Activated CD4-positive, alpha-beta memory T cell treated with anti-CD3 and anti-CD28 coated beads, Interleukin-2, amount 10 ng/mL, durations not matched to agents 7 days and 5 days (primary cell): ENCODE measurements at regions of chr11 and their contacts with region 1.

Region 1: DNA sequence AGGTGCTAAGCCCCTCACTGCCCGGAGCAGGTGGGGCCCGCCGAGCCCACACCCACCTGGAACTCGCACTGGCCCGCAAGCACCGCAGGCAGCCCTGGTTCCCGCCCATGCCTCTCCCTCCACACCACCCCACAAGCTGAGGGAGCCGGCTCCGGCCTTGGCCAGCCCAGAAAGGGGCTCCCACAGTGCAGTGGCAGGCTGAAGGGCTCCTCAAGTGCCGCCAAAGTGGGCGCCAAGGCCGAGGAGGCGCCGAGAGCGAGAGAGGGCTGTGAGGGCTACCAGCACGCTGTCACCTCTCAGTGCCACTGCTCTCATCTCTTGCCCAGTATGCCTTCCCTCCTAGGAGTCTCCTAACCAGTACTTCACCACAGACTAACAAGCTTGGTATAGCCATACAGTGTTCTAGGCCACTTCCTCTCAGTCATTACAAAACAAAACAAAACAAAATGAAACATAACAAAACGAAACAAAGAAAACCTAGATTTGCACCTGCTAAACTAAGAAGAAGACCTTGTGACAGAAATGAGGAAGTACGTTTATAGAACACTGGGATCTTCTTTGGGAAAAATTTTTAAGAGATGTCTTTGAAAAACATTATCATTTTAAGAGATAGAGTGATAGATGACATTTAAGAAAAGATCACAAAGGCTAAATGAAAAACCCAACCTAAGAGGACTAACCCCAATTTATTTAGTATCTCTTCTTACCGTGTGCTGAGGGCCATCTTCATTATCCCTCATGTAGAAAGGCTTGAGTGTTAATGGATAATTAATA is 47.7 kb upstream of the GAB2 start:
- DNase-seq: peak; percentile 65
- H3K4me3 Mint-ChIP-seq: peak overlapping the region; percentile 72
- H3K27ac Mint-ChIP-seq: peak overlapping the region; percentile 97
- H3K4me1 Mint-ChIP-seq: peaks cover 45% of the 10 kb centered on the region
- H3K27me3 Mint-ChIP-seq: no peaks in the 10 kb centered on the region

Region 2: GRCh38 chr11:78325274-78325781 is 140.0 kb before region 1 on chr11:
- CTCF ChIA-PET with region 1: no interaction called
- POLR2A ChIA-PET with region 1: no interaction called
- DNase-seq: peak; percentile 44
- H3K4me3 Mint-ChIP-seq: no peak overlapping the region
- H3K27ac Mint-ChIP-seq: peak overlapping the region; percentile 93
- H3K4me1 Mint-ChIP-seq: peaks cover 87% of the 10 kb centered on the region
- H3K27me3 Mint-ChIP-seq: no peaks in the 10 kb centered on the region

Region 3: DNA sequence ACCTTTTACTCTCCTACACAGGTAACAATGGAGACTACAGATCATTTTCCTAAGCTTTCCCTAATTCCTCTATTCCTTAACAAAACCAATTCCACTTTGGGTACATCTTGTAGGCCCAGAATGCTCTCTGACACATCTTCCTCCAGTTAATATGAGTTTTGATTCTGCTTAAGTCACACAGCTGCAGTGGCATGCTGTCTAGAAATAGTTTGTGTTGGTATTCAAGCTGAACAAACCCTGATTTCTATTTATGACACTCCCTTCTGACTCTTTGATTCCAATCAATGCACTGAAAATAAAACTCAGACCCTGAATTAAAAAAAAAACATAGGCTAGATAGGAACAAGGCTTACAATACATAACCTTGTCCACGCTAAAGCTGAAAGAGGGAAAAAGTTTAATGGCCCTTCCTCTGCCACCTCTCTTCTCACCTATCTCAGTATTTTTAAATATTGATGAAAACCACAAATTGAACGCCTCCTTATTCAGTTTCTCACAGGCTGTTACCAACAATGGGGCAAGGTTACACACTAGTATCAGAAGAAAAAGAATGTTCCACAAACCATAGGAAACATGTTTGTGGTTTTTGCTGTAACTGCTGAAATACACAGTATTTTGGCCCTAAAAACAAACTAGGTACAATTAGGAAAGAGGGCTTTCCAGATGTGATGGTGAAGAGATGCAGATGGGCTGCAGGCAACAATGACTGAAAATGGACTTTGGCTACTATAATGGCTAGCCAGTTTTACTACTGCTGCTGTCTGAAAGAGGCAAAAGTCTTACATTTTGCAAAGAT is 12.0 kb before region 1 on chr11:
- CTCF ChIA-PET with region 1: interaction called, 3 read pairs
- POLR2A ChIA-PET with region 1: interaction called, 10 read pairs
- DNase-seq: no peak
- H3K4me3 Mint-ChIP-seq: no peak overlapping the region
- H3K27ac Mint-ChIP-seq: peak overlapping the region; percentile 41
- H3K4me1 Mint-ChIP-seq: peaks cover 25% of the 10 kb centered on the region
- H3K27me3 Mint-ChIP-seq: no peaks in the 10 kb centered on the region

Region 4: DNA sequence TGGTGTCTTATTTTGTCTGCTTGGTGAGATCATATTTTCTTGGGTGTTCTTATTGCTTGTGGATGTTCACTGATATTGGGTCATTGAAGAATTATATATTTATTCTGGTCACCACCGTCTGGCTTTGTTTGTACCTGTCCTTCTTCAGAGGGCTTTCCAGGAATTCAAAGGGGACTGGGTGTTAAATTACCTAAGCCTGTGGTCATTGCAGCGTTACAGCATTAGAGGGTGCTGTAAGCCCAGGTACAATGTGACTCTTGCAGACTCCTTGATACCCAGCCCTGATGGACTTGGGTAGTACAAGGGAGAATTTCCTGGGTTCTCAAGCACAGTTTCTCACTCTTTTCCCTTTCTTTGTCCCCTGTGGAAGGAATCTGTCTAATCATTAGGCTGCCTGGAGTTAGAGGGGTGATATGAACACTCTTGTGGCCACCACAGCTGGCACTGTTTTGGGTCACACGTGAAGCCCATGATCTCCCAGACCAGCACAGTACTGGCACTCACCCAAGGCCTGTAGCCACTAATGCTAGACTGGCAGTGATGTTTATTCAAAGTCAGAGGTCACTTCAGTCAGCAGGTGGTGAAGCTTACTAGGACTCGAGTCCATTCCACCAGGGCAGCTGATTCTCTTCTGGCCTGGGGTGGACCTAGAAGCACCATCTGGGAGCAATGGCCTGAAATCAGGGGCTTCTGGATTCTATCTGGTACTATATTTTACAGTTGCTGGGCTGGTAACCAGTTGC is 165.4 kb after region 1 on chr11:
- CTCF ChIA-PET with region 1: no interaction called
- POLR2A ChIA-PET with region 1: no interaction called
- DNase-seq: no peak
- H3K4me3 Mint-ChIP-seq: no peak overlapping the region
- H3K27ac Mint-ChIP-seq: no peak overlapping the region
- H3K4me1 Mint-ChIP-seq: peaks cover 4% of the 10 kb centered on the region
- H3K27me3 Mint-ChIP-seq: peaks cover 12% of the 10 kb centered on the region